Activated CD4-positive, alpha-beta memory T cell treated with anti-CD3 and anti-CD28 coated beads, Interleukin-2, amount 10 ng/mL, durations not matched to agents 7 days and 5 days (primary cell): ENCODE measurements at regions of chr14 and their contacts with region 1.

Region 1: GRCh38 chr14:53109105-53110041 is 43.8 kb downstream of the DDHD1 start:
- DNase-seq: peak; percentile 80
- H3K4me3 Mint-ChIP-seq: no peak overlapping the region
- H3K27ac Mint-ChIP-seq: no peak overlapping the region
- H3K4me1 Mint-ChIP-seq: peaks cover 30% of the 10 kb centered on the region
- H3K27me3 Mint-ChIP-seq: no peaks in the 10 kb centered on the region

Region 2: DNA sequence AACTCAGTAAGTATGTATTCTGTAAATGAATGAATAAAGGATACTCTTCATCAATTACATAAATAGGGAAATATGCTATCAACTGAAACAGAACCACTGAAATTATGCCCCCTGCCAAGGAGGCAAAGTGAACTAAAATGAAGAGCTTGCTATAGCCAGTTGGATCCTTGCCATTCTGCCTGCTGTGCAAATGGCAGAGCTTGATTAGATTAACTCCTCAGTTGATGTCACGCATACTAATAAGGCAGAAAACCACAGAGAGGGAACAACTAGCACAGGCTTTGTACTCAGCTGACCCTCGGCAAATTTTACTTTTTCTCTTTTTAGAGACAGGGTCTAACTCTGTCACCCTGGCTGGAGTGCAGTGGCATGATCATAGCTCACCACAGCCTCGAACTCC is 121.9 kb before region 1 on chr14:
- CTCF ChIA-PET with region 1: no interaction called
- POLR2A ChIA-PET with region 1: no interaction called
- DNase-seq: no peak
- H3K4me3 Mint-ChIP-seq: no peak overlapping the region
- H3K27ac Mint-ChIP-seq: no peak overlapping the region
- H3K4me1 Mint-ChIP-seq: no peaks in the 10 kb centered on the region
- H3K27me3 Mint-ChIP-seq: peaks cover 8% of the 10 kb centered on the region

Region 3: GRCh38 chr14:53093206-53093605 is 16.2 kb before region 1 on chr14:
- CTCF ChIA-PET with region 1: interaction called, 3 read pairs
- POLR2A ChIA-PET with region 1: interaction called, 14 read pairs
- DNase-seq: no peak
- H3K4me3 Mint-ChIP-seq: no peak overlapping the region
- H3K27ac Mint-ChIP-seq: no peak overlapping the region
- H3K4me1 Mint-ChIP-seq: peaks cover 8% of the 10 kb centered on the region
- H3K27me3 Mint-ChIP-seq: no peaks in the 10 kb centered on the region

Region 4: DNA sequence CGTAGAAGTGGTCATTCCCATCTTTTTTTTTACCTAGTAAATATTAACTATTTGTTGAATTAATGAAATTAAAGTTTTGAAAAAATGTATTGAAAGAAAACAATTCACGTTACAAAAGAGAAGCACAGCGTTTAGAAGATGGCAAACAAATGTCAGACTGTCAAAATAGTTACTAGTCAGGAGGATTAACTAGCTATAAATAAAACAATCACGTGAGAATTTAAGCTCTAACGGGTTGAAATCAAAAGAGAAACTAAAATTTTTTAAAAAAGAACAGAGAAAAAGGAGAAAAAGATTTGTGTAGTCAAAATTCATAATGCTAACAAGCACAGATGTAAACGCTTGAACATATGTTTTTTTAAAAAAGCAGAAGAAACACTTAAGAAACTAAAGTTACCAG is 17.4 kb after region 1 on chr14:
- CTCF ChIA-PET with region 1: interaction called, 9 read pairs
- POLR2A ChIA-PET with region 1: interaction called, 22 read pairs
- DNase-seq: no peak
- H3K4me3 Mint-ChIP-seq: peak overlapping the region; percentile 52
- H3K27ac Mint-ChIP-seq: peak overlapping the region; percentile 72
- H3K4me1 Mint-ChIP-seq: peaks cover 23% of the 10 kb centered on the region
- H3K27me3 Mint-ChIP-seq: no peaks in the 10 kb centered on the region

Region 5: GRCh38 chr14:53137568-53138203 is 28.3 kb after region 1 on chr14:
- CTCF ChIA-PET with region 1: no interaction called
- POLR2A ChIA-PET with region 1: interaction called, 18 read pairs
- DNase-seq: no peak
- H3K4me3 Mint-ChIP-seq: no peak overlapping the region
- H3K27ac Mint-ChIP-seq: no peak overlapping the region
- H3K4me1 Mint-ChIP-seq: peaks cover 52% of the 10 kb centered on the region
- H3K27me3 Mint-ChIP-seq: no peaks in the 10 kb centered on the region

Region 6: GRCh38 chr14:53167602-53168328 is 58.4 kb after region 1 on chr14:
- CTCF ChIA-PET with region 1: no interaction called
- POLR2A ChIA-PET with region 1: no interaction called
- DNase-seq: no peak
- H3K4me3 Mint-ChIP-seq: no peak overlapping the region
- H3K27ac Mint-ChIP-seq: no peak overlapping the region
- H3K4me1 Mint-ChIP-seq: no peaks in the 10 kb centered on the region
- H3K27me3 Mint-ChIP-seq: no peaks in the 10 kb centered on the region